ENCODE measurements at regions of chr2 and their contacts with region 1.

Region 1: GRCh38 chr2:191907545-191907944 is 60.7 kb upstream of the CAVIN2 start:
- DNase-seq: no peak
- ATAC-seq: peak; percentile 76

Region 2: GRCh38 chr2:191811807-191812602 is 95.5 kb before region 1 on chr2:
- intact Hi-C with region 1: loop called (anchors 5 kb)
- DNase-seq: no peak
- ATAC-seq: peak; percentile 83

Region 3: DNA sequence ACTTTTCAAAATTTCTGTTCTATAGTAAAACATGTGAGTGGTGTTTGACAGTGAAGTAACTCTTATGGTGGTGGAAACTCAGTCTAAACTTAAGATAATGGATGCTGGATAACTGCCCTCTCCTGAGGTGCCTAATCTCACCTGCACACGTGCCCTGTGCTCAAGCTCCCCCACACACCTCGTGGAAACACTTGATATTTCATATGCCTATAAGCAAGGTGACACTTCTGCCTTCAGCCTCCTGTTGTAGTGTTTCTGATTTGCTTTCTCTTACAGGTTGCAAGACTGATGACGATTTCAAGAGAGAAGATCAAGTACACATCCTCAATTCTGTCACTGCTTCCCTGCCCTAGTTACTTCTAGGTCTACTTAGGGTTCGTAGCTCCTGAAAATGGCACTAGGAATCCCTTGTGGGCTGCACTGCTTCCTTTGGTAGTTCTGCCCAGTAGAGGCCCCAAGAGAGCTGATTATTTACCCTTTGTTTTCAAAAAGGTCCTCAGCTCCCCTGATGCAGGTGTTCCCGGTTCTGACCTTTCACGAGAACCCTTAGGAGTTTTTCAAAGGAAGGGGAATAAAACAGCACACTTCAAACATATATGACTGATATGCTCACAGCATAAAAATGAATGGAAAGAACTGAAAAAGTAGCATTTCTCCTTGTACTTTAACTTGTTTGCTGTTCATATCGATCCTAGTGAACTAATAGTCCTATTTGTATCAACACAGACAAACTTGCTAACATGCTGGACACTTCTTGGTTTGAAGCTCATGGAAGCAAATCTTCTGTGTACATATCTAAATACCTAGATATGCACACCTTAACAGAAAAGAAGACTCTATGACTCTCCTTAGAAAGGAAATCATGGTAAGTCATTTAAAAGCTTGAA is 67.4 kb before region 1 on chr2:
- intact Hi-C with region 1: loop called (anchors 5 kb)
- DNase-seq: no peak
- ATAC-seq: no peak